HCT116 (cell line): ENCODE measurements at regions of chr13 and their contacts with region 1.

Region 1: GRCh38 chr13:49300739-49301589 is 53.2 kb downstream of the CDADC1 start:
- DNase-seq: peak; percentile 42
- ATAC-seq: peak; percentile 90
- H3K4me3 ChIP-seq: peak overlapping the region; percentile 20 to 47; a peak in 3 of 4 replicates
- H3K27ac ChIP-seq: no peak overlapping the region
- H3K4me1 ChIP-seq: peaks cover 7 to 20% of the 10 kb centered on the region in 2 experiments
- H3K27me3 ChIP-seq: no peaks in the 10 kb centered on the region
- CTCF ChIP-seq: peak; percentile 82 to 95 (median 87)
- POLR2A ChIP-seq: no peak
- RAD21 ChIP-seq: peak; percentile 96

Region 2: GRCh38 chr13:49436890-49437289 is 135.9 kb after region 1 on chr13:
- CTCF ChIA-PET with region 1: no interaction called
- POLR2A ChIA-PET with region 1: no interaction called
- RAD21 ChIA-PET with region 1: interaction called in 1 of 2 experiments, 3 read pairs
- intact Hi-C with region 1: loop called (anchors 2 kb)
- DNase-seq: no peak
- ATAC-seq: 0 out of 2 replicates have a peak, but pooled peaks have one; percentile 22
- H3K4me3 ChIP-seq: no peak overlapping the region
- H3K27ac ChIP-seq: no peak overlapping the region
- H3K4me1 ChIP-seq: no peaks in the 10 kb centered on the region
- H3K27me3 ChIP-seq: no peaks in the 10 kb centered on the region
- CTCF ChIP-seq: 0 out of 6 replicates have a peak, but pooled peaks of 1 of the 3 experiments have one; percentile 6
- POLR2A ChIP-seq: no peak
- RAD21 ChIP-seq: peak; percentile 44; the same call in 1 of the 2 replicates

Region 3: DNA sequence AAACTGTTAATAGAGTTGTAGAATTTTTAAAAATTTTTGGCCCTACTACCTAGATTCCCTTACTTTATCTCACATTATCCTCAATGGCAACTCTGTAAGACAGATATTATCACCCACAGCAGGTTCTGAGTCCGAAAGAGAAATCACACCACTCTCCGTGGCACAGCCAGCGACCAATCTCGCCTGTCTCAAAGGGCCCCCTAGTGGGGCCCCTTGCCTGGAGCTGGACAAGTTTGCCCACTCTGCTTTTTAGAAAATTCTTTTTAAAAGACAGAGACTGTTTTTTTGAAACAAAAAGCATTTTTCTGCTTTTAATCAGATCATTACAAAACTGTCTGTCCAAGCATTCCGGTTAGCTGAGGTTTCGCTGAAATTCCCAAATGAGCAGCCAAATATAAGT is 216.5 kb after region 1 on chr13:
- CTCF ChIA-PET with region 1: no interaction called
- POLR2A ChIA-PET with region 1: no interaction called
- RAD21 ChIA-PET with region 1: no interaction called
- intact Hi-C with region 1: loop called (anchors 1 kb)
- DNase-seq: no peak
- ATAC-seq: peak; percentile 58; the same call in 1 of the 2 replicates
- H3K4me3 ChIP-seq: no peak overlapping the region
- H3K27ac ChIP-seq: no peak overlapping the region
- H3K4me1 ChIP-seq: no peaks in the 10 kb centered on the region
- H3K27me3 ChIP-seq: no peaks in the 10 kb centered on the region
- CTCF ChIP-seq: peak; percentile 12 to 52 (median 39); a peak in 5 of 6 replicates
- POLR2A ChIP-seq: no peak
- RAD21 ChIP-seq: peak; percentile 42; the same call in 1 of the 2 replicates